GM10248 (cell line): ENCODE measurements at regions of chr6 and their contacts with region 1.

Region 1: DNA sequence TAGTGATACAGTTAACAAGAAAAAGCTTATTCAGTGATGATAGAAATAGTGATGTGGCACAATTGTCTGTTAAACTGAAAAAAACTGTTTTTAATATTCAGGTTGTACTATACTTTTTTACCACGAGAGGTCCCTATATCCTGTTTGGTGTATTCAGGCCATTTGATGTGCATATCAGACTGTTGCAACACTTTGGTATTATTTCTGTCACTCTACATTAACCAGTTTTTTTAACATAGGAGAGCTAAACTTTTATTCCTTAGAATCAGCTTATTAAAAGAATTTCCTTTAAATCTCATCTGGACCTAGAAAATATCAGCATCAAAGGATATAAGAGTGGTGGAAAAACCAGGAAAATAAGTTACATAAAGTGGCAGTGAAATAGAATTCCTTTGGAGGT is 36.8 kb downstream of the TSPYL4 start:
- DNase-seq: no peak
- CTCF ChIP-seq: peak; percentile 23

Region 2: DNA sequence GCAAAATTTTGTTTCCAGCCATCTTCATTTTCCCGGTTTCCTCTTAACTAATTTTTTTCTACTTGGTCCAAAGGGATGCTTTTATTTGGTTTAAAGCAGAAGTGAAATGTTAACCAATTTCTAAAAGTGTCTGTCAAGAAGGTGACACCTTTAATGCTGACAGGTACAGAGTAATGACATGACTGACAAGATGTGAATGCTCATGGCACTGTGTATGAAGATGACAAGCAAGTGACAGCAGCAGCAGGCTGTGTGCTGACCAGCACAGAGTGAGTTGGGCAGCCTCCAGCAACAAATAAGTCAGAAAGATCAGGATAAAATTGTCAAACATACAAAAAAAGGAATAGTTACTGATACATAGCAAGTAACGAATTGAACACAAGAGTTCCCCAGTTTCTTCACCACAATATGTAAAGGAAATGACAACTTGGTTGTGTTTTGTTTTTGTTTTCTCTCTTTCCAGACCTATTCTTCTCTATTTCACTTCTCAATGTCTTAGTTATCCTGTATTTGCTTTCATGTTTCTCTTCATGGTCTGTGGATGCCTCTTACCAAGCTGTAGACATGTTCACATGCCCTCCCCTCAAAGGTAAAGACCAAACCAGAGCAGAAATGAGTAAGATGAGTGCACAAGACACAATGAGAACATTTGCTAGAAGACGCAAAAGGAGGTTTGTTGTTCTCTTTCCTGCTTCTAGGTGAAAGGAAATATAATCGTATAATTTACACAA is 331.3 kb before region 1 on chr6:
- CTCF ChIA-PET with region 1: no interaction called
- POLR2A ChIA-PET with region 1: no interaction called
- DNase-seq: peak; percentile 13
- CTCF ChIP-seq: no peak

Region 3: DNA sequence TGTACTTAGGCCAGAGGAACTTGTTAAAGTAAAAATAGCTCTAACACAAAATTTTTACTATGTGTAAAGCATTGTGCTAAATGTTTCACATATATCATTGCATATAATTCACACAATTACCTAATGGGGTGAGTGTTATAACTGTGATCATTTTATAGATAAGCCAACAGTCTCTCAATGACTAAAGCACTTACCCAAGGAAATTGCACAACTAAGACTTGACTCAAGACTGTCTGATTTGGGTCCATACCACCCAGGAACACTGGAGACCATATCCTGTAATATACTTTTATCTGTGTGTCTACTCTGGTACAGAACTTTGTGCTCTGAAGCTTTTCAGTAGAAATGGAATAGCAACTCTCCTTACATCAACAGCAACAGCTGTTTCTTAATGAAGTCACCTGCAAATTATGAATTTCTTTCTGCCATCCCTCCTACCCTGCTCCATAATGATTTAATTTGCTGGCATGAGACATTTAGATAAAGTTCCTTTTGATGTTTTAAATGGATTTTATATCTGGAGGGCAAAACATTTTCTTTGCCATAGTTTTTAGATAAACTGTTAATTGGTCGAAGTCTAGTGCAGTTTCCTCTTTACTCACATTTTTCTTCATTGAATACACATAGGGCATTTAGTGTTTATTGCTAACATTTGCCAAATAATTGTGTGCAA is 10.7 kb before region 1 on chr6:
- CTCF ChIA-PET with region 1: interaction called, 15 read pairs
- POLR2A ChIA-PET with region 1: no interaction called
- DNase-seq: no peak
- CTCF ChIP-seq: no peak

Region 4: GRCh38 chr6:116229287-116229913 is 12.3 kb after region 1 on chr6:
- CTCF ChIA-PET with region 1: interaction called, 16 read pairs
- POLR2A ChIA-PET with region 1: no interaction called
- DNase-seq: no peak
- CTCF ChIP-seq: no peak

Region 5: DNA sequence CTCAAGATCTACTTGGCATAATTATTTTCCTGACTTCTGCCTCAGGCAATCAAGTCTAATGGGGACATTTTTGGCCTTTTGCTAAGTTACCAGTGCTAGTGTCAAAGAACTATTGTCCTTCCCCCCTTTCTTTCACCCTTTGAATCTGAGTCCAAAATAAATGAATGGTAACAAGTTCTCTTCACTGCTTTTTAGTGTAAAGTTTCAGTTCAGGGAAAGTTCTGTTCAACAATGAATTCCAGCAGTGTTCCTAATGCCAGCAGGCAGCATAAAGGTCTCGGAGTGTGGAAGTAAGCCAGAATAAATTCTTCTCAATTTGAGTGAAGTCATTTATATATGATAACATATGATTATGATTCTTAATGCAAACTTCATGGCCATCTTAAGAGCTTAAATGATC is 83.5 kb after region 1 on chr6:
- CTCF ChIA-PET with region 1: no interaction called
- POLR2A ChIA-PET with region 1: no interaction called
- DNase-seq: no peak
- CTCF ChIP-seq: no peak